Left ventricle myocardium superior (tissue), 1 donor: ENCODE measurements at regions of chr4 and their contacts with region 1.

Region 1: DNA sequence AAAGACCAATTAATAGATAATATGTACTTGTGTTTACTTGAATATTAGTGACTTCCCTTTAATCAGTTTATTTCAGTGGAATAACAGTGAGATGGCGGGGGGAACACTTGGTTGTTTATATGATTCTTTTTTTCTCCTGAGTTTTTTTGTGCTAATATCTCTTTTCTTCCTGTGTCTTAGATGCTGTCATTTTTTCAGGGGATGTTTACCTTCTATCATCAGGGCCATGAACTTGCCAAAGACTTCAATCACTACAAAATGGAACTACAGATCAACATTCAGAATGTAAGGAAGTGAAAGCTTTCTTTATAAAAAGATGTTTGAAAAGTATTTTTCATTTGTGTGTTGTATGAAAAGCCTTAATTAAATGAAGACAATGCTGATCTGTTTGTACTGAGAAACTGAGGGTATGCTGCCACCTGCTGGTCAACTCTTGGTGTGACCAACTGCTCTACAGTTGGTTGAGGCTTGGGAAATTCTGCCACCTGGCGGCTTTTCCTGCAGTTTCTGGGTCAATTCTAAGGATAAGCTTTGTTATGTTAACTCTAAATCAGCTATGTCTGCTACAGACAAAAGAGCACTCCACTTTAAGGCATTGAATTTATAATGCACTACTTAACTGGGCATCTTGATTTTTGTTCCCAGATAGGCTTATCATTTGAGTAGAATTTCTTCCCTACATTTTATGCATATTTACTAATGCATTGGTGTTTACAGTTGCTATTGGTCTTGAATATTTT is 134.8 kb downstream of the ARHGAP10 start:
- DNase-seq: peak; percentile 93
- ATAC-seq: peak; percentile 87

Region 2: GRCh38 chr4:147707865-147708672 is 158.6 kb before region 1 on chr4:
- intact Hi-C with region 1: loop called (anchors 5 kb)
- DNase-seq: no peak
- ATAC-seq: peak; percentile 79